ENCODE measurements at regions of chr9 and their contacts with region 1.

Region 1: DNA sequence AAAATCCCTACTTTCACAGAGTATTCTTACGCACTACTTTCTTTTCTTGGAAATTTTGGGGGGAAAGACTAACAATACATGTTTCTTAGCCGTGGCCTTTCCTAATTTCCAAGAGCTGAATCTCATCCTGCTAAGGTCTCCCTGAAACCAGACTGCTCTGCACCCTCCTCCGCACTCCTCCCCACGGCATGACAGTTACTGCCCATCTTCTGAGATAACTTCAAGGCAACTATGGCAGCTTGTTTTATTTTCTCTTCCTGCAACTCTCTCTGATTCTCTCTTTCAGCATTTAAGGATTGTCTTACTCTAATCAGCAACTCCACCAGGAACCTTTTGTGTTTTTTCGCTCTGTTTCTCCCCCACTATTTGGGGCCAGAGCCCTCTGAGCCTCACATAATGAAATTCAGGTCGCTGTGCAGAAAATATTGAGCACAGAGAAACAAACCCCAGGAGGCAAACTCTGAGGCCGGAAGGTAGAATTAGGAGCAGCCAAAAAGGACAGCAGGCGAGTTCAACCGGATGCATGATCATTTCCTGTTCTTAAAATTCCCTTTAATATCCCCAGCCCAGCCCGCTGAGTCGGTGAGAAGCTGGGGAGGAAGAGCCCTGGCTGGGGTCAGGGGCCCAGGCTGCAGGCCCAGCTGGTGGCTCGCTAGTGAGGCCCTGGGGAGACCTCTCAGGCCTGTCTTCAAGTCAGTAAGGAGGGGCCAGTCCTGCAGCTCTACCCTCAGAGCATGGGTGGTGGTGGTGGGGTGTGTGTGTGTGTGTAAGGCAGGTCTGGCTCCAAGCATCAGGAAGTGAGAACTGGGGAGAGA is 213.6 kb upstream of the S1PR3 start:
- DNase-seq: no peak
- H3K4me3 ChIP-seq: no peak overlapping the region
- H3K27ac ChIP-seq: peak overlapping the region; percentile 19 to 20
- H3K4me1 ChIP-seq: peaks cover 0 to 34% of the 10 kb centered on the region in 2 donors
- H3K27me3 ChIP-seq: no peaks in the 10 kb centered on the region
- CTCF ChIP-seq: no peak

Region 2: DNA sequence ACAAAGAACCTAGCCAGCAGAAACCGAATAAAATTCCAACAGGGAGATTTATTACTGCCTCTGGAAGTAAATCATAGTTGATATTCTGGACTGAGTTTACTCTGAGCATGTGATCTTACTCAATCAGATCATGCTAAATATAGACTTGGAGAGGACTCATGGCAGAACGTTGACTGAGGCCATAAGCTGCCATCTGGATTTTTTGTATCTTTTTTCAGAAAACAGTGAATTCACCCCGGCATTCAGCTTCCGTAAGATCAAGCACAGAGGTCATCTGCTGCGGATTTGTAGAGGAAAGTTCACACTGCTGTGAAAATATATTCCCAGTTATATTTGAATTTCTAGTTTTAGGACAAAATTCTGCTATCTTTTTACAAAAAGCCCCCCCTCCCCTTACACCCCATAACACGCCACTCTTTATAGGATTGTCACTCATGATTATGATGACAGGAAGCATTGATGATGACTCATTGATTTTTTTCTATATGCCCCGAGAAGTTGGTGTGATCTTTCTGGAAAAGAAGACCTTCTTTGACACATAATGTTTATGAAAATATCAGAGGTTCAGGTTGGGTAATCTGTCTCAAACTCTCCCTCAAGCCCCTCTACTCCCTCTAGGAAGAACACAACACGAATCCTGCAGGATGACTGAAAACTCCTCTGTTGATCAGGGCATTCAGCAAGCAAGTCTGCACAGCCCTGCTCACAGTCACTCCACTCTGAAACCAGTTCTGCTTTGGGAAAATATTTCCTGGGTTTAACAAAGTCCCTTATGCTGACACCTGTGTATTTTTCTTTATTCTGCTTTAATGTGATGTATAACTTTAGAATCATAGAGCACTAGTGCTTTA is 172.0 kb before region 1 on chr9:
- intact Hi-C with region 1: loop called (anchors 10 kb)
- DNase-seq: no peak
- H3K4me3 ChIP-seq: peak overlapping the region in 1 of 2 donors; percentile 0
- H3K27ac ChIP-seq: peak overlapping the region; percentile 74 to 81
- H3K4me1 ChIP-seq: peaks cover 0 to 21% of the 10 kb centered on the region in 2 donors
- H3K27me3 ChIP-seq: no peaks in the 10 kb centered on the region
- CTCF ChIP-seq: no peak

Region 3: GRCh38 chr9:88733651-88734421 is 43.9 kb before region 1 on chr9:
- intact Hi-C with region 1: loop called (anchors 5 kb)
- DNase-seq: peak in 1 of 2 donors; percentile 75
- H3K4me3 ChIP-seq: no peak overlapping the region
- H3K27ac ChIP-seq: no peak overlapping the region
- H3K4me1 ChIP-seq: peaks cover 0 to 6% of the 10 kb centered on the region in 2 donors
- H3K27me3 ChIP-seq: no peaks in the 10 kb centered on the region
- CTCF ChIP-seq: no peak

Region 4: GRCh38 chr9:88814577-88814976 is 36.9 kb after region 1 on chr9:
- intact Hi-C with region 1: loop called (anchors 5 kb)
- DNase-seq: peak; percentile 44 to 93
- H3K4me3 ChIP-seq: no peak overlapping the region
- H3K27ac ChIP-seq: peak overlapping the region; percentile 58 to 70
- H3K4me1 ChIP-seq: peaks cover 10 to 15% of the 10 kb centered on the region in 2 donors
- H3K27me3 ChIP-seq: no peaks in the 10 kb centered on the region
- CTCF ChIP-seq: no peak

Region 5: DNA sequence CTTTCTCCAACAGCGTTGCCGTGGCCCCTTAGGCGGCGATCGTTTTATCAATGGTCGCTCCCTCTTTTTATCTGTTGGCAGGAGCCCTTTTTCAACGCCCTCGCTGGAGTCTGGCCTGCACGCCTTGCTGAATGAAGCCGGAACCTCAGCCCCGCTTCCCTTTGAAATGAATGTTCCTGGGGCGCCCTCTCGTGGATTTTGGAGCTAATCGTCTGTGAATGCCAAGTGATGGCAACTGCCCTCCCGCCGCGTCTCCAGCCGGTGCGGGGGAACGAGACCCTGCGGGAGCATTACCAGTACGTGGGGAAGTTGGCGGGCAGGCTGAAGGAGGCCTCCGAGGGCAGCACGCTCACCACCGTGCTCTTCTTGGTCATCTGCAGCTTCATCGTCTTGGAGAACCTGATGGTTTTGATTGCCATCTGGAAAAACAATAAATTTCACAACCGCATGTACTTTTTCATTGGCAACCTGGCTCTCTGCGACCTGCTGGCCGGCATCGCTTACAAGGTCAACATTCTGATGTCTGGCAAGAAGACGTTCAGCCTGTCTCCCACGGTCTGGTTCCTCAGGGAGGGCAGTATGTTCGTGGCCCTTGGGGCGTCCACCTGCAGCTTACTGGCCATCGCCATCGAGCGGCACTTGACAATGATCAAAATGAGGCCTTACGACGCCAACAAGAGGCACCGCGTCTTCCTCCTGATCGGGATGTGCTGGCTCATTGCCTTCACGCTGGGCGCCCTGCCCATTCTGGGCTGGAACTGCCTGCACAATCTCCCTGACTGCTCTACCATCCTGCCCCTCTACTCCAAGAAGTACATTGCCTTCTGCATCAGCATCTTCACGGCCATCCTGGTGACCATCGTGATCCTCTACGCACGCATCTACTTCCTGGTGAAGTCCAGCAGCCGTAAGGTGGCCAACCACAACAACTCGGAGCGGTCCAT is 223.5 kb after region 1 on chr9:
- intact Hi-C with region 1: loop called (anchors 5 kb)
- DNase-seq: peak; percentile 46 to 94
- H3K4me3 ChIP-seq: peak overlapping the region; percentile 33 to 39
- H3K27ac ChIP-seq: peak overlapping the region; percentile 72 to 75
- H3K4me1 ChIP-seq: peaks cover 18 to 44% of the 10 kb centered on the region in 2 donors
- H3K27me3 ChIP-seq: no peaks in the 10 kb centered on the region
- CTCF ChIP-seq: peak; percentile 76 to 87 (median 76)

Measured in ascending aorta (tissue), 2 donors.